Activated CD4-positive, alpha-beta memory T cell treated with anti-CD3 and anti-CD28 coated beads for 36 hours (primary cell): ENCODE measurements at regions of chr13 and their contacts with region 1.

Region 1: GRCh38 chr13:24270639-24271141 is 38.7 kb upstream of the C1QTNF9 start:
- DNase-seq: peak; percentile 78
- H3K4me3 Mint-ChIP-seq: peak overlapping the region; percentile 89
- H3K27ac Mint-ChIP-seq: peak overlapping the region; percentile 97
- H3K4me1 Mint-ChIP-seq: peaks cover 80% of the 10 kb centered on the region
- H3K27me3 Mint-ChIP-seq: peaks cover 2% of the 10 kb centered on the region

Region 2: DNA sequence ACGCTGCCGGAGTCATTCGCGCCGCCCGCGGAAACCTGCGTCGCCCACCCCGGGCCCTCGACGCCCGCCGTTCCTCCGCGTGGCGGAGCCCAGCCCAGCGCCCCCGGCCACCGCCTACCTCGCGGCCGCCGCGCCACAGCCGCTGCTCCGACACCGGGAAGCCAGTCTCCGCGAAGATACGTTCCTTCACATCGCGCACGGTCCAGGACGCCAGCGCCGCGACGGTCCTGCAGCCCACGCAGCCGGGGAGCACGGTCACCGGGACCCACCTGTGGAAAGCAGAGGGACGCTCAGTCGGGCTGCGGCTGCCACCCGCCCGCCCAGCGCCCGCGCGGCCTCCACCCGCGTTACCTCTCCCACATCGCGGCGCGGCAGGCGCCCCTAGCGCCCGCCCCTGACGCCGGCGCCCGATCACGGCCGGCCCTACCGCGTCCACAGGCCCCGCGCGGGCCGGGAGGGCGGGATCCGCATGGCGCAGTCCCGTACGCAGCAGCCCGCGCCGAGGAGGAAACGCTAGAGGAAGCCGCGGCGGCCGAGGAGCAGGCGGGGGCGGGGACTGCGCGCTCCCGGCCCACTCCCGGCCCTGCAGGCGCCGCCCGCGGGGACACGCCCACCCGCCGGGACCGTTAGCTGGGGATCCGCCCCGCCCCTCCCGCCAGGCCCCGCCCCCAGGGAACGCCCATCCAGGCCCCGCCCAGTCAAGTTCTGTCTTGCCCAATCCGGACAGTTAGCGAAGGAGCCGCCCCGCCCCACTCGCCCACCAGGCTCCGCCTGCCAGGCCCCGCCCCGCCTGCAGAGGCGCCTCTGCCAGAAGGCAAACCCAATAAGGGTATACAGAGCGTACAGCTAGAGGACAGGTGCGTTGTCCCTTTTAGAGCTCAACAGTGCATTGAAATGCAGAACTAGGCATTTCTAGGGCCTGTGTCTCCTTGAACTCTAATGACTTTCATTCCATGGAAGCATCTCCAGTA is 895.4 kb before region 1 on chr13:
- CTCF ChIA-PET with region 1: no interaction called
- POLR2A ChIA-PET with region 1: interaction called, 3 read pairs
- intact Hi-C with region 1: loop called (anchors 5 kb)
- DNase-seq: peak; percentile 98
- H3K4me3 Mint-ChIP-seq: peak overlapping the region; percentile 73
- H3K27ac Mint-ChIP-seq: no peak overlapping the region
- H3K4me1 Mint-ChIP-seq: peaks cover 69% of the 10 kb centered on the region
- H3K27me3 Mint-ChIP-seq: no peaks in the 10 kb centered on the region

Region 3: GRCh38 chr13:24097064-24097463 is 173.6 kb before region 1 on chr13:
- CTCF ChIA-PET with region 1: no interaction called
- POLR2A ChIA-PET with region 1: no interaction called
- intact Hi-C with region 1: loop called (anchors 1 kb)
- DNase-seq: peak; percentile 75
- H3K4me3 Mint-ChIP-seq: no peak overlapping the region
- H3K27ac Mint-ChIP-seq: peak overlapping the region; percentile 76
- H3K4me1 Mint-ChIP-seq: peaks cover 17% of the 10 kb centered on the region
- H3K27me3 Mint-ChIP-seq: peaks cover 19% of the 10 kb centered on the region

Region 4: DNA sequence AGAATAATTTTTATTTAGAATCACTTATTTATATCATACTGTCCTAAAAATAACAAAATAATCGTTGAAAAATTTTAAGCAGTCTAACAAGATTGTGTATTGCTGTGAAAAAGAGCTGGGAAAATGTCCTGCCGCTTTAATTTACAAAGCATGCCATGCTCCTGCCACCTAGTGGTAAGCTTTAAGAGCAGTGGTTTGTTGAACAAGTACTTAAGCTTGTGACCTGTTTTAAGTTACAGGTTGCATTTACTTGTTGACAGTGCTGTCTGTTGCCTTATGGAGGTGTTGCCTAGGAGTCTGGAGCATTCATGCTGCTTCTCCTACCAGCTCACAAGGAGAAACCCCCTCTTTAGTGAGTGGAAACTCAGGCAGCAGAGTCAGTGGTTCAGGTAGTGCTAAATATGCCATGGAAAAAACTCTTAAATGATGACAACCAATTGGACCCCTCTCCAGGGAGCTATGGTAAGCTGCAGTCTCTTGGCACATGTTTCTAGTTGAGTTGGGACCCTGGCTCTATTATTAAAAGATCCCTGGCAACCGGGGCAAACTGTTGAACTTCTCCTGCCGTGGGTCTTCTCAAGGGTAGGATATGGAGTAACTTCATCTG is 41.7 kb before region 1 on chr13:
- CTCF ChIA-PET with region 1: interaction called, 12 read pairs
- POLR2A ChIA-PET with region 1: interaction called, 3 read pairs
- intact Hi-C with region 1: loop called (anchors 2 kb)
- DNase-seq: peak; percentile 44
- H3K4me3 Mint-ChIP-seq: no peak overlapping the region
- H3K27ac Mint-ChIP-seq: no peak overlapping the region
- H3K4me1 Mint-ChIP-seq: peaks cover 24% of the 10 kb centered on the region
- H3K27me3 Mint-ChIP-seq: no peaks in the 10 kb centered on the region

Region 5: GRCh38 chr13:24459234-24459633 is 188.5 kb after region 1 on chr13:
- CTCF ChIA-PET with region 1: no interaction called
- POLR2A ChIA-PET with region 1: no interaction called
- intact Hi-C with region 1: loop called (anchors 5 kb)
- DNase-seq: peak; percentile 31
- H3K4me3 Mint-ChIP-seq: no peak overlapping the region
- H3K27ac Mint-ChIP-seq: peak overlapping the region; percentile 2
- H3K4me1 Mint-ChIP-seq: peaks cover 20% of the 10 kb centered on the region
- H3K27me3 Mint-ChIP-seq: no peaks in the 10 kb centered on the region

Region 6: GRCh38 chr13:24618014-24618955 is 347.6 kb after region 1 on chr13:
- CTCF ChIA-PET with region 1: no interaction called
- POLR2A ChIA-PET with region 1: no interaction called
- intact Hi-C with region 1: loop called (anchors 2 kb)
- DNase-seq: peak; percentile 87
- H3K4me3 Mint-ChIP-seq: peak overlapping the region; percentile 23
- H3K27ac Mint-ChIP-seq: peak overlapping the region; percentile 81
- H3K4me1 Mint-ChIP-seq: peaks cover 28% of the 10 kb centered on the region
- H3K27me3 Mint-ChIP-seq: no peaks in the 10 kb centered on the region

Region 7: DNA sequence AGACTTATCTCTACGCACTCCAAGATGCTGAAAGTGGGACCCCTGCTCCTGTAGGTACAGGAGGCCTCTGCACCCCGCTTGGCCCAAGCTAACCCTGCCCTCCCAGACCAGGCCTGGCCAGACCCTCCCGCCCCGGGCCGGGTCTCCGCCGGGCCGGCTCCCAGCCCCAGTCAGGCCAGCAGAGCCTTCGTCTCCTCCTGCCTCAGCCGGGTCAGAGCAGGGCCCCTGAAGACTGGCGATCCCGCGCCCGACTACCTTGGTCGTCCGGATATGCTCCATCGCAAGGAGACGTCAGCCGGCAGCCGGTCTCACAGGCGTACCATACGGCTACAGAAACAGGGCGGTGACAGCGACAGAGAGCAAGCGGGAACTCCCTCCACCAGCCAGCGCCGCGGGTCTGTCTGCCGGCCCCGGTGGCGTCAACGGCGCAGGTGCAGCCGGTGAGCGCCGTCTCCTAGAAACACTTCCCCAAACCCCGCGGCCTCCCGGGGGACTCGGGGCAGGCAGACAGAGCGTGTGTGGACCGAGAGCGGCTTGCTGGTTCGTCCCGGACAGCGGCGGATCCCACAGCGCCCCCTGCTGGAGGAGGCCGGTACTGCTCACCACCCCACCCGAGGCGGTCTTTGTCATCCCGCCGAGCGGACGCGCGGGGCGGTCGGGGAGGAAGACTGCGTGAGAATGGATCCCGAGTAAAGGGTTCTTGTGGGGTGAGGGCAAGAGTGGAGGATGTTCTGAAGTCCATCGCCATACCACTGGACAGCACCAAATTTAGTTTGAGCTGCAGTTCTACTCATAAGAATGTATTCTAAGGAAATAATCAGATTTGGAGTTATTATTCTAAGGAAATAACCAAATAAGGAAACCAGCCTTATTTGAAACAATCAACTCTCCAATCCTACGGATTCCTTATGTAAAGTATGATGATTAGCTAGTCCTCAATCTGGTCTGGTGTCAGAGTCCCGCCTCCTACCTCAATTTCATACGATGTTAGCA is 1016.6 kb after region 1 on chr13 and contains the start of gene MTMR6:
- CTCF ChIA-PET with region 1: no interaction called
- POLR2A ChIA-PET with region 1: no interaction called
- intact Hi-C with region 1: loop called (anchors 10 kb)
- DNase-seq: peak; percentile 96
- H3K4me3 Mint-ChIP-seq: peak within 1 kb of the TSS; percentile 93
- H3K27ac Mint-ChIP-seq: peak within 1 kb of the TSS; percentile 86
- H3K4me1 Mint-ChIP-seq: peaks cover 40% of the 10 kb centered on the region
- H3K27me3 Mint-ChIP-seq: no peaks in the 10 kb centered on the region
- total RNA-seq, gene MTMR6: 12.2 to 12.5 TPM